ENCODE measurements at regions of chr2 and their contacts with region 1.

Region 1: GRCh38 chr2:168773719-168774521 is 28.5 kb upstream of the NOSTRIN start:
- DNase-seq: no peak

Region 2: DNA sequence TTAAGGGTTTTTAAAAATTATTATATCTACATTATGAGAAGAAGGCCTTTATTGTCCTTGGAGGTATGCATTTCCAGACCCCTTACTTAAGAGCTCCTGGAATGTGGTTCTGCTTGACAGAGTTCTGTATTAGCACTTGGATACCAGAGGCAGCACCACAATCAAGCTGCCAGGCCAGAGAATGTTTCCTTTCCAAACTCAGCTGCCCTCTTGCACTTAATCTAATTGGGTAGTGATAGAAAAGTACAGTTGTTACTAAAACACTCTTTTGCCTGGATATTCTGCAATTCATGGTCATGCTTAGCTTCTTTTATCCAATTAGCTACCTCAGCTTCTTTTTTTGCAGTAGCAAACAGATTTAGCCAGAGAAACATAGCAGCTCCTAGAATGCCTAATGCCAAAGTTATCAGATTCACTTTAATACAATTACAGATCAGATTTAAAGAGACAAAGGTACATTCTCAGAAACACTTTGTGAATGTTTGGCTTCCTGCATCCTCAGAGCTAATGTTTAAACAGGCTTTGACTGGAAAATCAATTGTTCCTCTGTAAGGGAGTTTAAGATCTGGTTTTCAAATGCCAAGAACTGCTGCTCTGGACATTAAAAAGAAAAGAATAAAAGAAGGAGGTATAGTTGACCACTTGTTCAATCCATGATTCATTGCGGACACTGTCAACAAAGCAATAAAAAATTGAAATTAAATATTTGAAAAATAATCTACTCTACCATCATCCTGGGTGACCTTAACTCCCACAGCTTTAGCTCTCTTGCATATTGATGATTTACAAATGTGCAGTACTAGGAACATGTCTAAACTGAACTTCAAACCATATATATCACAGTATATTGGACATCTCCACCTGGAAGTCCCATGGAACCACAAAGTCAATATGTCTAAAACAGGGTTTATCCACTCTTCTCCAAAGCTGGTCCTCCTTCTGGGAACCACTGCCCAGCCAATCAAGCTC is 41.3 kb after region 1 on chr2:
- intact Hi-C with region 1: loop called (anchors 5 kb)
- DNase-seq: no peak

Region 3: GRCh38 chr2:168849610-168850009 is 75.7 kb after region 1 on chr2:
- intact Hi-C with region 1: loop called (anchors 5 kb)
- DNase-seq: no peak

Region 4: DNA sequence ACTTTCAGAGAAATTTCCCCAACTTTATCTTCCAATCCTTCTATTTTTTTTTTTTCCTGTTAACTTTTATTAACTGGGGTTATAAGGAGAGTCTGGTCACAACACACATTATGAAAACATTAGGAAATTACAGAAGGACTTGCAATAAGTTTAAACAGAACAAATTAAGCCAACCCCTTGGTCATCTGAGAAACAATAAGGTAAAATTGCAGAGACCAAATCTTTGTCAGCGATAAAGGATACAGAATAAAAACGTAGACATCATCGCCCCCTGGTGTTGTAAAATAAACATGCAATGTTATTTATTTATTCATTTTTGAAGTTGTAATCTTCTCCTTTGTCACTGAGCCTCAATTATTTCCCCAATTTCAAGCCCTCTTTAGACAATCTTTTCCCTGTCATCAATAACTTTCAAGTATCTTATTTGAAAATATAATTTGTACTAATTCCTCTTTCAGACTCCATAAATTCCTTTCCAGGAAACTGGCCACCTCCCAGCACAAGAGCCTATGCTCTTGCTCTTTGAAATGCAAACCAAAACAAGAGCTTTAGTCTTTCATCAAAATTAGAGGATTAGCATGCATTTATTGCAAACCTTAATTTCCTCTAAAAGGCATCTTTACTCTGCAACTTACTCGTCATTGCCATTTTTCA is 146.7 kb after region 1 on chr2:
- intact Hi-C with region 1: loop called (anchors 2 kb)
- DNase-seq: no peak

Region 5: GRCh38 chr2:169705927-169706326 is 932.0 kb after region 1 on chr2:
- intact Hi-C with region 1: no loop called
- DNase-seq: no peak

Measured in cardiac septum (tissue), 1 donor.